PC-9 (cell line): ENCODE measurements at regions of chr11 and their contacts with region 1.

Region 1: GRCh38 chr11:11028017-11028692 is 170.3 kb upstream of the ZBED5 start:
- DNase-seq: peak in 1 of 2 experiments; percentile 44
- H3K4me3 ChIP-seq: no peak overlapping the region
- H3K27ac ChIP-seq: no peak overlapping the region
- H3K4me1 ChIP-seq: no peaks in the 10 kb centered on the region
- H3K27me3 ChIP-seq: peaks cover 4% of the 10 kb centered on the region; the same call in 1 of the 2 replicates
- CTCF ChIP-seq: peak; percentile 76

Region 2: GRCh38 chr11:11089805-11090204 is 61.6 kb after region 1 on chr11:
- CTCF ChIA-PET with region 1: no interaction called
- POLR2A ChIA-PET with region 1: no interaction called
- intact Hi-C with region 1: no loop called
- DNase-seq: no peak
- H3K4me3 ChIP-seq: no peak overlapping the region
- H3K27ac ChIP-seq: no peak overlapping the region
- H3K4me1 ChIP-seq: no peaks in the 10 kb centered on the region
- H3K27me3 ChIP-seq: 0 out of 2 replicates have a peak, but pooled peaks cover 2% of the 10 kb centered on the region
- CTCF ChIP-seq: no peak

Region 3: GRCh38 chr11:11787305-11788062 is 759.3 kb after region 1 on chr11:
- CTCF ChIA-PET with region 1: interaction called, 20 read pairs
- POLR2A ChIA-PET with region 1: no interaction called
- intact Hi-C with region 1: loop called (anchors 1 kb)
- DNase-seq: peak; percentile 41 to 46
- H3K4me3 ChIP-seq: no peak overlapping the region
- H3K27ac ChIP-seq: no peak overlapping the region
- H3K4me1 ChIP-seq: no peaks in the 10 kb centered on the region
- H3K27me3 ChIP-seq: peaks cover 10% of the 10 kb centered on the region; the same call in 1 of the 2 replicates
- CTCF ChIP-seq: peak; percentile 79